ENCODE measurements at regions of chr6 and their contacts with region 1.

Region 1: DNA sequence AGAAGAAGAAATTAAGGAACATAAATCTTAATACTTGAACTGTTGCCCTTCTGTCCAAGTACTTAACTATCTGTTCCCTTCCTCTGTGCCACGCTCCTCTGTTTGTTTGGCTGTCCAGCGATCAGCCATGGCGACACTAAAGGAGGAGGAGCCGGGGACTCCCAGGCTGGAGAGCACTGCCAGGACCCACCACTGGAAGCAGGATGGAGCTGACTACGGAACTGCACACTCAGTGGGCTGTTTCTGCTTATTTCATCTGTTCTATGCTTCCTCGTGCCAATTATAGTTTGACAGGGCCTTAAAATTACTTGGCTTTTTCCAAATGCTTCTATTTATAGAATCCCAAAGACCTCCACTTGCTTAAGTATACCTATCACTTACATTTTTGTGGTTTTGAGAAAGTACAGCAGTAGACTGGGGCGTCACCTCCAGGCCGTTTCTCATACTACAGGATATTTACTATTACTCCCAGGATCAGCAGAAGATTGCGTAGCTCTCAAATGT is 17.1 kb downstream of the IRF4 start:
- DNase-seq: peak; percentile 54 to 59
- ATAC-seq: peak; percentile 71 to 100 (median 94)
- H3K4me3 ChIP-seq: no peak overlapping the region
- H3K27ac ChIP-seq: peak overlapping the region in 1 of 10 donors; percentile 26
- H3K4me1 ChIP-seq: peaks cover 0 to 10% (median 0%) of the 10 kb centered on the region in 9 donors
- H3K27me3 ChIP-seq: peaks cover 0 to 24% (median 13%) of the 10 kb centered on the region in 7 donors
- CTCF ChIP-seq: peak in 8 of 9 donors; percentile 6 to 58 (median 50)

Region 2: DNA sequence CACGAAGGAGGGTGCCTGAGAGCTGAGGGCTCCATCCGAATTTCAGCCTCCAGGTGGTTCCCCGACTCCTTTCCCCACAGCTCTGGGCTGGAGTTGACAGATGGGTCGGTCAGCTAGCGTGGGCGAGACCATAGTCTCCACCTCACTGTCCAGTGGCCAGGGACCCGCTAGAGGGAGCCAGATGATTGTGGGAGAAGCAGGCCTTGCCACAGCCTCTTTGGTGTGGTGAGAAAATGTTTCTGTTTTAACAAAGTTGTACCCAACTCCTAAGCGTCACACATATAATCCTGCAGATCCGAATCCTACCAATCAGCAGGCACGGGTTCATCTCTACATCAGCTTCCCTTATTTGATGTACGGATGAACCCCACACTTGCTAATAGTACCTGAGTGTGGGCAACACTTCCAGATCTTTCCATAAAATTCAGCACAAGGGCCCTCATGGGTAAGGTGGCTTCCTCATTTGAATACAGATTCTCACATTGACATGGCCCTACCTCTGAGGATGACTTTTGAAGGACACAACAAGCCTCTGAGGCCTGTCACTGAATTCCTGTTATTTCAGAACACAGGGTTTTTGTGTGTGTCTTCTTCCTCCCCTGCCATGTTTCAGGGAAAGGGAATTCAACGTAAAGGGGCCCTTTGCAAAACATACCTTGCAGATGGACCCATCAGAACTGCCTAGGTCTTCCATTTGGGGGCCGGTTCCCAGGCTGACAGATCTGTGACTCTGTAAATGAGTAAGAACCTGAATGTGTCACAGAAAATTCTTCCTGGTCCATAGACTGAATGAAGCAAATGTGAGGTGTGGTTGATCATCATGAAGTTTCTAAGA is 219.6 kb before region 1 on chr6:
- intact Hi-C with region 1: loop called in 2 of 10 experiments (anchors 2 to 5 kb)
- DNase-seq: peak; percentile 84 to 88
- ATAC-seq: peak; percentile 89 to 96 (median 95)
- H3K4me3 ChIP-seq: no peak overlapping the region
- H3K27ac ChIP-seq: no peak overlapping the region
- H3K4me1 ChIP-seq: peaks cover 0 to 7% (median 0%) of the 10 kb centered on the region in 9 donors
- H3K27me3 ChIP-seq: no peaks in the 10 kb centered on the region
- CTCF ChIP-seq: peak; percentile 72 to 96 (median 90)

Region 3: GRCh38 chr6:217048-217659 is 191.5 kb before region 1 on chr6:
- intact Hi-C with region 1: loop called in 1 of 10 experiments (anchors 10 kb)
- DNase-seq: no peak
- ATAC-seq: no peak
- H3K4me3 ChIP-seq: no peak overlapping the region
- H3K27ac ChIP-seq: no peak overlapping the region
- H3K4me1 ChIP-seq: peaks cover 0 to 29% (median 0%) of the 10 kb centered on the region in 9 donors
- H3K27me3 ChIP-seq: peaks cover 0 to 28% (median 4%) of the 10 kb centered on the region in 7 donors
- CTCF ChIP-seq: peak in 8 of 9 donors; percentile 25 to 50 (median 41)

Region 4: GRCh38 chr6:364609-365540 is 43.8 kb before region 1 on chr6:
- intact Hi-C with region 1: no loop called
- DNase-seq: no peak
- ATAC-seq: no peak
- H3K4me3 ChIP-seq: no peak overlapping the region
- H3K27ac ChIP-seq: no peak overlapping the region
- H3K4me1 ChIP-seq: no peaks in the 10 kb centered on the region
- H3K27me3 ChIP-seq: peaks cover 0 to 32% (median 22%) of the 10 kb centered on the region in 7 donors
- CTCF ChIP-seq: no peak

Region 5: GRCh38 chr6:436308-437036 is 27.8 kb after region 1 on chr6:
- intact Hi-C with region 1: no loop called
- DNase-seq: no peak
- ATAC-seq: peak in 6 of 8 donors; percentile 8 to 70 (median 39)
- H3K4me3 ChIP-seq: no peak overlapping the region
- H3K27ac ChIP-seq: no peak overlapping the region
- H3K4me1 ChIP-seq: peaks cover 0 to 21% (median 0%) of the 10 kb centered on the region in 9 donors
- H3K27me3 ChIP-seq: no peaks in the 10 kb centered on the region
- CTCF ChIP-seq: no peak

Measured in heart right ventricle (tissue), 16 donors.